ENCODE measurements at regions of chr13 and their contacts with region 1.

Region 1: DNA sequence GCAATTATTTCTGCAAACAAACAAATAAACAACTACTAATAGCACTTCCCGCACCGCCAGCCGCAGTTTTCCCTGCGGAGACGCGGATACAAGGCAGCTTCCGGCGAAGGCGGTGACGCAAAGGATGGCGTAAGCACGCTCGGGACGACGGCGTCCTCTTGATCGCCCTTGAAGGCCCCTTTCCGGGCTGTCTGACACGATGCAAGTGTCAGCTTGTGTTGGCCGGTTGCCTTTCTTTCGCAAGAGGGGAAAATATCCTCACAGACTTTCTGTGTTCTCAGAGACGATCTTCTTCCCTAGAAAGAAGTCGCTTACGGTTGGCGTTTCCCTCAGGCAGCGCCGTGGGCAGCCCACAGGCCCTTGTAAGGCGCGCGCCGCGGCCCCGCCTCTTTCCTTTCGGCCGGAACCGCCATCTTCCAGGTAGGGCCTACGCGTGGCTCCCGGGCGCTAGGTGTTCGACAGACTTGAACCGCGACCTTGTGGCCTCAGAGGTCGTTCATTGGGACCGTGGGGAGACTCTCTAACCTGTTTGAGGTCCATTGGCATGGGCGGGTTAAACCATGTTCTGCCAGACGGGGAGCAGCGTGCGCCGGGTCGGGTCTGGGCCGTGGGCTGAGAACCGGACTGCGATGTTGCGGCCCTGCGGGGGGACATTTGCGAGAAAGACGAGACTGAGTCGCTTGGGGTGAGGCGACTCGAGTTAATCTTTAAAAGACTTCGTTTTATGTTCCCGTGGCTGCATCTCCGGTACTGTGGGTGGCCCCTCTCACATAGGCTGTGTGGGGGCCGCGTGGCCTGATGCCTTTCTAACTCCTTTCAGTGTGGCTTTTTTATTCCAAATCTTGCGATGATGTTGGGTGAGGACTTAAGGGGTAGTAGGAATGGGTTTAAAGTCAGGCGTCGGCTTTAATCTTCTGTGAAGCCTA is at the start of gene RPL21:
- DNase-seq: peak; percentile 89
- ATAC-seq: peak; percentile 93
- H3K4me3 Mint-ChIP-seq: peak within 1 kb of the TSS; percentile 93
- H3K27ac Mint-ChIP-seq: peak within 1 kb of the TSS; percentile 99
- H3K4me1 Mint-ChIP-seq: peaks cover 48% of the 10 kb centered on the region
- H3K27me3 Mint-ChIP-seq: no peaks in the 10 kb centered on the region
- CTCF ChIP-seq: no peak
- total RNA-seq, gene RPL21: 1,996 and 2,528 TPM in 2 replicates

Region 2: DNA sequence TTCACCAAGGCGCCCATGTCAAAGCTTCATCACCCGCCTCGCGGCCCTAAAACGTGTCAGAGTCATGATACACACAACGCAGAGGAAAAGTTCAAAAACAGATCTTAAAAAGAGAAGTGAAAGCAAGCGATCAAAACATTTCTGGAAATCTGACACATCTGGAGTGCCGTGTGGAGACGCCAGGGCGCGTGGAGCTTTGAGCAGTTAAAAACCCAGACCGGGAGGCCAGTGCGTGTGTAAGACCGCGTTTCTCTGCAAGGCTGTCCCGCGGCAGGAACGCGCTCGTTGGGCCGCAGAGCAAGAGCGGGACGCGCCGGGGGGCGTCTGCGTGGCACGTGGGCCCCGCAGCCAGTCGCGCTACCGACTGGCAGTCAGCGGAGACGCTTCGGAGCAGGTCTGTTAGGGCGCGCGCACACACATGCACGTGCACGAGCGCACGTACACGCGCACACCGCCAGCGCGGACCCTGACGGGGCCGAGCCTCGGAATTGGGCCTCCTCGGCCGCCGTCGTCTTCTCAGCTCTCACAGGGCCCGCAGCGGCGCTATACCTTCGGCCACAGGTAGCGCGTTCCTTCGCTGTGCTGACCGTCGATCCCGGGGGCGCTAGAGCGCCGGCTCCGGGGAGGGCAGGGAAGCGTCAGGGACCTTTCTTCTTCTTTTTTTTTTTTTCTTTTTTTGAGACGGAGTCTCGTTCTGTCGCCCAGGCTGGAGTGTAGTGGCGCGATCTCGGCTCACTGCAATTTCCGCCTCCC is 1065.1 kb before region 1 on chr13:
- CTCF ChIA-PET with region 1: no interaction called
- POLR2A ChIA-PET with region 1: no interaction called
- intact Hi-C with region 1: loop called (anchors 1 kb)
- DNase-seq: peak; percentile 94
- ATAC-seq: peak; percentile 84
- H3K4me3 Mint-ChIP-seq: peak overlapping the region; percentile 87
- H3K27ac Mint-ChIP-seq: peak overlapping the region; percentile 91
- H3K4me1 Mint-ChIP-seq: peaks cover 48% of the 10 kb centered on the region
- H3K27me3 Mint-ChIP-seq: no peaks in the 10 kb centered on the region
- CTCF ChIP-seq: no peak

Region 3: GRCh38 chr13:27171827-27172494 is 79.5 kb before region 1 on chr13:
- CTCF ChIA-PET with region 1: no interaction called
- POLR2A ChIA-PET with region 1: interaction called, 19 read pairs
- intact Hi-C with region 1: loop called (anchors 1 kb)
- DNase-seq: peak; percentile 94
- ATAC-seq: peak; percentile 83
- H3K4me3 Mint-ChIP-seq: peak overlapping the region; percentile 91
- H3K27ac Mint-ChIP-seq: peak overlapping the region; percentile 93
- H3K4me1 Mint-ChIP-seq: peaks cover 69% of the 10 kb centered on the region
- H3K27me3 Mint-ChIP-seq: no peaks in the 10 kb centered on the region
- CTCF ChIP-seq: no peak

Region 4: GRCh38 chr13:27270594-27271520 is 19.4 kb after region 1 on chr13 and contains the start of gene RASL11A:
- CTCF ChIA-PET with region 1: interaction called, 5 read pairs
- POLR2A ChIA-PET with region 1: interaction called, 5 read pairs
- intact Hi-C with region 1: loop called (anchors 1 kb)
- DNase-seq: peak; percentile 85
- ATAC-seq: peak; percentile 91
- H3K4me3 Mint-ChIP-seq: peak within 1 kb of the TSS; percentile 90
- H3K27ac Mint-ChIP-seq: peak within 1 kb of the TSS; percentile 14
- H3K4me1 Mint-ChIP-seq: peaks cover 28% of the 10 kb centered on the region
- H3K27me3 Mint-ChIP-seq: no peaks in the 10 kb centered on the region
- CTCF ChIP-seq: peak; percentile 99
- total RNA-seq, gene RASL11A: 1.4 and 2.0 TPM in 2 replicates

Region 5: GRCh38 chr13:27309967-27310598 is 58.7 kb after region 1 on chr13:
- CTCF ChIA-PET with region 1: no interaction called
- POLR2A ChIA-PET with region 1: no interaction called
- intact Hi-C with region 1: no loop called
- DNase-seq: no peak
- ATAC-seq: no peak
- H3K4me3 Mint-ChIP-seq: no peak overlapping the region
- H3K27ac Mint-ChIP-seq: no peak overlapping the region
- H3K4me1 Mint-ChIP-seq: peaks cover 19% of the 10 kb centered on the region
- H3K27me3 Mint-ChIP-seq: no peaks in the 10 kb centered on the region
- CTCF ChIP-seq: no peak

Region 6: GRCh38 chr13:27481766-27482165 is 230.3 kb after region 1 on chr13:
- CTCF ChIA-PET with region 1: no interaction called
- POLR2A ChIA-PET with region 1: no interaction called
- intact Hi-C with region 1: loop called (anchors 2 kb)
- DNase-seq: no peak
- ATAC-seq: no peak
- H3K4me3 Mint-ChIP-seq: no peak overlapping the region
- H3K27ac Mint-ChIP-seq: peak overlapping the region; percentile 95
- H3K4me1 Mint-ChIP-seq: peaks cover 63% of the 10 kb centered on the region
- H3K27me3 Mint-ChIP-seq: no peaks in the 10 kb centered on the region
- CTCF ChIP-seq: no peak

Region 7: DNA sequence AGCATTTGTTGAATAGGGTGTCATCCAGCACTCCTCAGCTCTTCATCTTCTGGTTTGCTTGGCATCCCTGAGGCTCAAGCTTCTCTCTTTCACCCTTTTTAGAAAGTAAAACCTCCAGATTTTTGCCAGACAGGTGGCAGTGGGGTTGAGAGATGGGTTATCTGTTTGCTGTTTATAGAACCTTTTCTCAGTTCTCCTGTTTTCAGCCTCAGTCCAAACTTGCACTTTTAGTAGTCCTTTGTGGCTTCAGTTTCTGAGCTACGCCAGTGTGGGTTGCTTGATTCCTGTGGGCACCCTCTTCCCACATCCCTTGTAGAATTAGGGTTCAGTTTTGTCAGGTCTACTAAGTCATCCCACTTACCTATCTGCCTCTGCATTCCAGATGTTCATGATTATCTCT is 1034.8 kb after region 1 on chr13:
- CTCF ChIA-PET with region 1: no interaction called
- POLR2A ChIA-PET with region 1: no interaction called
- intact Hi-C with region 1: no loop called
- DNase-seq: no peak
- ATAC-seq: no peak
- H3K4me3 Mint-ChIP-seq: no peak overlapping the region
- H3K27ac Mint-ChIP-seq: no peak overlapping the region
- H3K4me1 Mint-ChIP-seq: peaks cover 5% of the 10 kb centered on the region
- H3K27me3 Mint-ChIP-seq: no peaks in the 10 kb centered on the region
- CTCF ChIP-seq: no peak

Measured in activated B cell treated with CpG ODN at 0.5 μM for 24 hours (primary cell).